BJ (cell line): ENCODE measurements at regions of chr15 and their contacts with region 1.

Region 1: DNA sequence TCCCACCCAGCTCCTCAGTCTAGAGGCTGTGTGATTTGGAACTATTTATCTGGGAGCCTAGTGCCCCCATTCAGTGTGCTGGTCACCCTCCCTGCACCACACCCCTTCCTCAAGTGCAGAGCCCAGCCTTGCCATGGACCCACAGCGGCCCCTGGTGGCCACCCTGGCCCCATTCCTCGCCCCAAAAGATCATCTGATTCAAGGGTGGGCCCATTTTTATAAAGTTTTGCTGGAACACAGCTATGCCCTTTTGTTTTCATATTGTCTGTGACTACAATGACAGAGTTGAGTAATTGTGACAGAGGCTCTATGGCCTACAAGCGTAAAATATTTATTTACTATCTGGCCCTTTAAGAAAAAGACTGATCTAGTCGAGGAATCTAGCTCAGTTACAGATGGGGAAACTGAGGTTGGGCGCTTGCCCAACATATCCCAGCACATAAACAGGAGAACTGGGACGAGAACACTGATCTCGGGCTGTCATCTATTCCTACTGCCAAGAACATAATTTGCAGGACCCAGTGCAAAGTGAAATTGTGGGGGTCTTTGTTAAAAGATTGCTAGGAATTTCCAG is 1.8 kb downstream of the FES start:
- DNase-seq: no peak
- H3K4me3 ChIP-seq: no peak overlapping the region
- H3K27me3 ChIP-seq: no peaks in the 10 kb centered on the region
- CTCF ChIP-seq: peak; percentile 99

Region 2: GRCh38 chr15:90642464-90643300 is 243.4 kb before region 1 on chr15:
- CTCF ChIA-PET with region 1: interaction called, 64 read pairs
- POLR2A ChIA-PET with region 1: no interaction called
- DNase-seq: no peak
- H3K4me3 ChIP-seq: no peak overlapping the region
- H3K27me3 ChIP-seq: no peaks in the 10 kb centered on the region
- CTCF ChIP-seq: peak; percentile 20; the same call in 1 of the 2 replicates

Region 3: GRCh38 chr15:90691982-90692773 is 193.9 kb before region 1 on chr15:
- CTCF ChIA-PET with region 1: interaction called, 34 read pairs
- POLR2A ChIA-PET with region 1: no interaction called
- DNase-seq: no peak
- H3K4me3 ChIP-seq: no peak overlapping the region
- H3K27me3 ChIP-seq: no peaks in the 10 kb centered on the region
- CTCF ChIP-seq: no peak

Region 4: GRCh38 chr15:90862964-90863778 is 23.0 kb before region 1 on chr15:
- CTCF ChIA-PET with region 1: interaction called, 12 read pairs
- POLR2A ChIA-PET with region 1: no interaction called
- DNase-seq: no peak
- H3K4me3 ChIP-seq: no peak overlapping the region
- H3K27me3 ChIP-seq: no peaks in the 10 kb centered on the region
- CTCF ChIP-seq: no peak

Region 5: DNA sequence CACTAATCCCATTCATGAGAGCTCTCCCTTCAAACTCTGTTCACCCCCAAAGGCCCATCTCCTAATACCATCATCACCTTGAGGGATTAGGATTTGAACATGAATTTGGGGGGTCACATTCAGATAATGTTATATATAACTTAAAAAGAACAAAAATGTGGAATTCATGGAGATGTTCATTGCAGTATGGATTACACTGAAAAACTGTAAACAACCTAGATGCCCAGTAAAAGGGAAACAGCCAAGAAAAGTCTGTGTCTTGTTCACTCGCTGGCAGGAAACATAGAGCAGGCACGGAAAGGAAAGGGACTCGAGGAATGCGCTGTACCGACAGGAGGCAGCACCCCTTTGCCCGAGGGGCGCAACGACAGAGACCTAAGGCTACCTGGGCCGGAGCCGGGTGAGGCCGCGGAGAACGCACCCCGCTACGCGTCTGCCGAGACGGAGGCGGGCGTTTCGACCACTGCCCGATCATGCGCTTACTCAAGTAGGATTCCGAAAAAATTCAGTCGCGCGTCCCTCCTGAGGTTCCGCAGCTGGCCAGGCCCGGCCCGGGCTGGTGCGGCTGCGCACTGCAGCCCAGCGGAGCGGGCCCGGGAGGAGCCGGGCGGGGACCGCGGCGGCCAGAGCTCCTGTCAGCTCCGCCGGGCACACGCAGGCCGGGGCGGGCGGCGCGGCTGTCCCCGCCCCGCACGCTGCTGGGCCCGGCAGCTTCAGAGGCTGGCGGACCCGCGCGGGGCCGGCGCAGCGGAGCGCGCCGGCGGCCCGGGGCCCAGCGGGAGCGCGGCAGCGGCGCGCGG is 16.1 kb after region 1 on chr15:
- CTCF ChIA-PET with region 1: interaction called, 73 read pairs
- POLR2A ChIA-PET with region 1: no interaction called
- DNase-seq: peak; percentile 35
- H3K4me3 ChIP-seq: peak overlapping the region; percentile 68
- H3K27me3 ChIP-seq: no peaks in the 10 kb centered on the region
- CTCF ChIP-seq: peak; percentile 92